ENCODE measurements at regions of chr7 and their contacts with region 1.

Region 1: DNA sequence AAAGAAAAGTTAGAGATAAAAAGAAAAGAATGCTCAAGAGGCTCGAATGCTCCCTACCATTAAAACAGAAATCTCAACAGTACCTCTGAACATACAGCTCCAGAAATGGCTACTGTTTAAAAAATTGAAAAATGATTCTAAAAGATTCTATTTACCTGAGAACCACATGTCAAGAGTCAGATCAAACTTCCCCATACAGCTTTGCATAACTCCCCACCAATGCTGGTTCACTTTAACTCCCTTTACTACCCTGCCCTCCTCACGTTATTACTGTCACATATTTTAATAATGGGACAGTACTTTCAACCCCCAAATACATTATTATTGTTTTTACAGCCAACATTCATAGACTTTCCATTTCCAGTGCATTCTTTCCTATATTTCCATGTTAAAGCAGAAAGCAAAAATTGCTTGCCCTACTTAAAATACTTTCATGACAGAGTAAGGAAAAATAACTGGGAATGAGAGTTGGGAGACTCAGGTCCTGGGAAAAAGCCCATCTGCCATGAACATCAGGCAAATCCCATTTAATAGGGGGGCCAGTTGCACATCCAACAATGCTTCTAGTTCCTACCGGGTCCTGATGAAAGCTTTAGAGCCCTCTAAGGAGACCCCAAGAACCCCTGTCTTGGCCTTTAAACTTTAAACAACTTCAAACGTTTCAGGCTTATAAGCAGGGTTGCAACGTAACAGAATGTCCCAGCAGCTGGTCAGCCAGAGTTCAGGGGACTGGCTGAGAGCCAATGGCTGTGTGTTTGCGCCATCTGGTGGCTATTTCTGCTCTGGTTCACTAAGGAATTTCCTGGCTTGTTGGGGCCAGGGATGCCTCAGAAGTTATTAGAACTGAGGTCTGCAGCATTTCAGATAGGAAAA is 247.4 kb downstream of the ELMO1 start:
- DNase-seq: peak; percentile 38 to 91
- H3K4me3 ChIP-seq: no peak overlapping the region
- H3K27ac ChIP-seq: peak overlapping the region; percentile 67 to 85
- H3K4me1 ChIP-seq: peaks cover 0 to 17% of the 10 kb centered on the region in 2 donors
- H3K27me3 ChIP-seq: no peaks in the 10 kb centered on the region
- CTCF ChIP-seq: peak; percentile 62 to 86 (median 71)

Region 2: GRCh38 chr7:36440880-36441279 is 760.4 kb before region 1 on chr7:
- intact Hi-C with region 1: loop called (anchors 10 kb)
- DNase-seq: no peak
- H3K4me3 ChIP-seq: no peak overlapping the region
- H3K27ac ChIP-seq: no peak overlapping the region
- H3K4me1 ChIP-seq: no peaks in the 10 kb centered on the region
- H3K27me3 ChIP-seq: no peaks in the 10 kb centered on the region
- CTCF ChIP-seq: peak in 2 of 3 experiments; percentile 31 to 53

Region 3: DNA sequence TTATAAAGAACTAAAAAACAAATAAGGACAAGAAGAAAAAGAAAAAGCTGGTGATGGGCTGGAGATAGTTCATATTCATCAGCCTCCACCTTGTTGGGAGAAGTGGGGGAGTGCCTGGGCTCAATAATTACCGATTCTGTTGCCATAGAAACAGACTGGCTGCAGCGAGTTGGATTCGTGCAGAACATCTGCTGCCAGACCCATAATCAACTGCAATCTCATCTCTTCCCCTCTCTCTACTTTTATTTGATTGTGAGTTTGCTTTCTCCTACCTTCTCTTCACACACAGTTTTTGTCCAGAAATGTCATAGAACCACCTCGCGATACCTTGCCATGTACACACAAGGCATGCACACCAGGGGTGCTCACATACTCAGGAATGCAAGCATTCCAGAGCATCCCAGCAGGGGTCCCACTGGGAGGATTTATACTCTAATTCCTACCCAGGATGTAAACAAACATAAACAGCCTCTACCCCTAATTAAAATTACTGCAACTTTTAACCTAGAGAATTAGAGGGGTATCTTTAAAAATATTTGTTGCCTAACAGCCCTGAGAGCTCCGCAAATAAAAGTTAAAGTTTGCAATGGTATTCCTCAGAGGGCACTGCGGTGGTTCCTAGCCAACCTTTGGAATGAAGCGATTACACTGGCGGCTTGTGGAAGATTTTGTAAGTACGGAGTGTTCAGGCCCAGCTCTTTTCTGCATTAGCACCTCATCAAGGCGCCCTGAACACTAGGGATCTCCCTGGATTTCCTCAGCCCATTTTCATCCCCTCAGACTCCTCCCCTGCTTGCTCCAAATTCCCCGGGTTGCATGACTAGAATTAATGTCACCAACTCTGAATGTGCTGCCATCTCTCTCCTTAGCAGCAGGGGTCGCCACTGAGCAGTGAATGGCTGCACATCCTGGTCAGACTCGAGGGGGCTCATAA is 214.5 kb before region 1 on chr7:
- intact Hi-C with region 1: loop called (anchors 5 kb)
- DNase-seq: peak; percentile 23 to 77
- H3K4me3 ChIP-seq: no peak overlapping the region
- H3K27ac ChIP-seq: no peak overlapping the region
- H3K4me1 ChIP-seq: no peaks in the 10 kb centered on the region
- H3K27me3 ChIP-seq: no peaks in the 10 kb centered on the region
- CTCF ChIP-seq: peak; percentile 75 to 88 (median 78)

Region 4: GRCh38 chr7:37833107-37833817 is 632.0 kb after region 1 on chr7:
- intact Hi-C with region 1: loop called (anchors 10 kb)
- DNase-seq: no peak
- H3K4me3 ChIP-seq: peak overlapping the region; percentile 34 to 45
- H3K27ac ChIP-seq: no peak overlapping the region
- H3K4me1 ChIP-seq: no peaks in the 10 kb centered on the region
- H3K27me3 ChIP-seq: no peaks in the 10 kb centered on the region
- CTCF ChIP-seq: peak; percentile 47 to 80 (median 66)

Region 5: DNA sequence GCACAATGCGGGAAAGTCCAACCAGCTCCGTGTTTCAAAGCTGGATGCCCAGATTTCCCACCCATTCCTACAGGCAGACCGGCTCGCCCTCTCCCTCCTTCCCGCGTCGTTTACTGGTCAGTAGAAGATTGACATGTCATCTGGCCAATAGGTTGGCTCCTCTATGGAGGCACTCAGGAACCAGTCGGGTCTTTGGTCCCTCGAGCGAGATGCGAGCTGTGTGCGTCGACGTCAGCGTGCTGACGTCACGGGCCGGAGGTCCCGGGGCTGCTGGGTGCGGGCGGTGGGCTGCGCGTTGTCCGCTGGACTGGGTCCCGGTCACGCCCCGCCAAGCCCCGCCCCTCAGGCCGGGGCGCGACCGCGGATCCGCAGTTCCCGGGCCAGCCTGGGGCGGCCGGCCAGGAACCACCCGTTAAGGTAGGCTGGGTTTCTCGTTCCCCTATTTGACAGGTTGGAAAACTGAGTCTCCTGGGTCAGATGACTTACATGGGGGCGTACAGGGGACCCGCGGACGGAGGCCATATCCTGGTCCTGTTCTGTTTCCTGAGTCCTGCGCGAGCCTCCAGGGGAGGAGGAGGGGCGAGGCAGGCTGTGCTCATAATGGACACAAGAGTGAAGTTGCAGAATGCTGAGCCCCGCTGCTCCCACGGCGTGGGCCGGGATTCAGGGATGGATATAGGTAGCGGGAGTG is 976.9 kb after region 1 on chr7 and contains the start of gene STARD3NL:
- intact Hi-C with region 1: loop called (anchors 5 kb)
- DNase-seq: peak; percentile 99
- H3K4me3 ChIP-seq: peak within 1 kb of the TSS; percentile 62 to 86
- H3K27ac ChIP-seq: peak within 1 kb of the TSS; percentile 90 to 94
- H3K4me1 ChIP-seq: peaks cover 6% of the 10 kb centered on the region in 2 donors
- H3K27me3 ChIP-seq: no peaks in the 10 kb centered on the region
- CTCF ChIP-seq: peak in 1 of 3 experiments; percentile 24
- total RNA-seq, gene STARD3NL: 19.7 TPM

Measured in ascending aorta (tissue), 2 donors.